Head of caudate nucleus (tissue), 42 donors: ENCODE measurements at regions of chr6 and their contacts with region 1.

Region 1: GRCh38 chr6:157823001-157823527 is at the start of gene SNX9:
- DNase-seq: peak; percentile 18 to 89 (median 78)

Region 2: DNA sequence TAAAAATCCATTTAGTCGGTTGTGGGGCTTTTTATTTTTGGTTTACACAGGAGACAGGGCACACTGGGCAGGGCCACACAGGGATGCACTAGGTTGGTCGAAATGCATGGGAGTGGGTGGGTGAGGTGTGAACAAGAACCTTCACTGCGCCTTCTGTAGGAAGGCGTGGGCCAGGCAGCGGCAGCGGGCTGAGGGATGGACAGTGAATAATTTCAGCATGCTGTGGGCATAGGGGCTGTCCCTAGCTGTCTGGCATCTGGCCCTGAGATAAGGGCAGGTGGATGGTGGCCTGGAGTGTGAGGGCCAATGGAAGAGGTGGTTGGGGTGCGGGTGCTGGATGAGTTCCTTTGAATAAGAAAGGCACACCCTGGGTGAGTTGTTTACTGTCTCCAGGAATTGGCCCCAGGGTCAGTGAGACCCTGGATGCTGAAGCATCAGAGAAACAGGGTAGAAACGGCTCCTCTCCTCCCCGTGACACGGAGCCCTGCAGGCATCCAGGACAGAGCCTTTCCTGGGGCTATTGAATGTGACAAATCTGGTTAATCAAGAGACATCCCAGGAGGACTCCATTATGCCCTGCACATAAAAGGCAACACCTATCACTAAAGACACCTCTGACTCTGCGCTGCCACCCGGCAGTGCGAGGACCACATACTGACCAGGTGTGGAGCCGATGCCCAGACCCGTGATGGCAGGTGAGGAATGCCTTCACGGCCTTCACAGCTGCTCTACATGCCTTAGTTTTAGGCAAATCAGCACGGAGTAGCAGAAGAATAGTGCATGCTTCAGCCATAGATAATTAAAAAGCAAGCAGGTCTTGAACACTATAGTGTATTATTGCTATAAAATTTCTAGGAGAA is 123.1 kb before region 1 on chr6:
- intact Hi-C with region 1: no loop called
- DNase-seq: no peak

Region 3: DNA sequence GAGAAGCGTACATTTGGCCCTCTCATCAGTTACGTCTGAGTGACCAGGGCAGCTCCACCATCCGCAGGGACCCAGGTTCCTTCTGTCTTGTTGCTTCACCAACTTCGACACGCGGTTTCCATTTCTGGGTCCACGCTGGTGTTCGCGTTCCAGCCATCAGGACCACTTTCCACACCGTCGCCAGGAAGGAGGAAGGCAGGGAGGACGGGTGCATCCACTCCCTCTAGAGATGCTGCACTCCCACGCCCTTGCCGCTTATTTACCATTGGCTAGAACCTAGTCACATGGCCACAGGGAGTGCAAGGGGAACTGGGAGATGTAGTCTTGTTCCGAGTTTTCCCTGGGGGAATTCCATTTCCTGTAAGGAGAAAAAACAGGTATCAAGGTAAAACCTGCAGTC is 33.2 kb before region 1 on chr6:
- intact Hi-C with region 1: no loop called
- DNase-seq: no peak

Region 4: DNA sequence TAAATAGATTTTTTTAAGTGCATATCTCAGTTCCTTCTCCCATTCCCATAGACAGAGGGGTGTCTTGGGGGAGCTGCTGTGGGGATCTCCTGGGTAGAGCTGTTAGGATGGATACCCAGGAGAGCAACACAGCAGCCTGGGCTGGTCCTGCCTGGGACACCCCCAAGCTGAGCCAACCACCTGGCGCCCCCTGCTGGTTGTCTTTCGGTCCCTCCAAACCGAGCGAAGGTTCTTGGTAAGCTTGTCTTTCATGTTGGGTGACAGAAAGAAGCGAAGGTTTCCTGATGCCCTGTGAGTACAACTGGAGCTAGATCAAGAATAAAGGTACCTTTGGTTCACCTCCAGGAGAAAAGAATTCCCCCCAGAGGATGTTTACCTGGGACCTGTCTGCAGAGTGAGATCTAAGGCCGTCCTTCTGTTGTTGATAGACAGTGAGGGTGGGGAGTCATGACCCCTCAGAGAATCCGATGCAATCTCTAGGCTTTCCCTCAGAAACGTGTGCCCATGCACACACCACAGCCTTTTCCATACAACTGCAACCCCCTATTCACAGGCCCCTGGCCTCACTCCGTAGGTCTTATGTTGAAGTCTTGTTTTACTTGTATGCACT is 50.8 kb after region 1 on chr6:
- intact Hi-C with region 1: loop called (anchors 10 kb)
- DNase-seq: peak; percentile 32 to 93 (median 78)